ENCODE measurements at regions of chr22 and their contacts with region 1.

Region 1: GRCh38 chr22:28829358-28830181 is 29.2 kb upstream of the XBP1 start:
- DNase-seq: peak; percentile 74
- H3K4me3 Mint-ChIP-seq: no peak overlapping the region
- H3K27ac Mint-ChIP-seq: no peak overlapping the region
- H3K4me1 Mint-ChIP-seq: peaks cover 9% of the 10 kb centered on the region
- H3K27me3 Mint-ChIP-seq: no peaks in the 10 kb centered on the region
- CTCF ChIP-seq: peak; percentile 95

Region 2: GRCh38 chr22:28741758-28742561 is 87.6 kb before region 1 on chr22 and contains the starts of genes CHEK2 and HSCB:
- CTCF ChIA-PET with region 1: no interaction called
- intact Hi-C with region 1: loop called (anchors 5 kb)
- DNase-seq: peak; percentile 98
- H3K4me3 Mint-ChIP-seq: peak within 1 kb of the TSS; percentile 90
- H3K27ac Mint-ChIP-seq: peak within 1 kb of the TSS; percentile 87
- H3K4me1 Mint-ChIP-seq: peaks cover 29% of the 10 kb centered on the region
- H3K27me3 Mint-ChIP-seq: no peaks in the 10 kb centered on the region
- CTCF ChIP-seq: no peak
- total RNA-seq, gene CHEK2: 27.0 and 35.7 TPM in 2 replicates
- total RNA-seq, gene HSCB: 15.7 and 16.5 TPM in 2 replicates

Region 3: DNA sequence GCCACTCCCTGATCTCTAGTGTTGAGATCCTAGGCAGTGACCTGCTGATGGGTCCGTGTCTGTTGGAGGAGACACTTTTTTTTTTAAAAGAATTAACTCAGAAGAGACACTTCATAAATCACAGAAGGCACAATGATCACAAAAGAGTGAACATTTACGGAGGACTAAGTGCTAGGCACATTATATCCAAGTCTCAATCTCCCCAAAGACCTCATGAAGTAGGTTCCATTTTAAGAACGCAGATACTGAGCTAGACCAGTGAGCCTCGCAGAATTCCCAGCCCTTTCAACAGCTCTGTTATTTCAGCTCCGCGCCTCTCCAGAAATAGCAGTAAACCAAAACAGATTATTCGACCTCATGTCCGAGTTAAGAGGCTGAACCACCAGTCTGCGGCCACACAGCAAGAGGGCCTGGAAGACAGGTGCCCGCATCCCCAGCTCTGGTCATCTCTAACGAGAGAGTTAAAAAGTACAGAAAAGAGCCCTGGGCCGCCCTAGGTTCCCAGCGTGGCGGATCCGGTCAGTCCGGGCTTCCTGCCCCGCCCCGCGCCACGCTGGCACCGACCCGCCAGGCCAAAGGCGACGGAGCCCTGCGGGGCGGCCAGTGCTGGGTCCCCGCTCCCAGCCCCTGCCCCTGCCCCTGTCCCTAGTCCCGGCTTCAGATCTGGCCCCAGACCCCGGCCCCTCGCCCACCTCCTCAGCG is 29.8 kb before region 1 on chr22:
- CTCF ChIA-PET with region 1: interaction called, 3 read pairs
- intact Hi-C with region 1: loop called (anchors 2 kb)
- DNase-seq: peak; percentile 72
- H3K4me3 Mint-ChIP-seq: peak overlapping the region; percentile 83
- H3K27ac Mint-ChIP-seq: peak overlapping the region; percentile 97
- H3K4me1 Mint-ChIP-seq: peaks cover 23% of the 10 kb centered on the region
- H3K27me3 Mint-ChIP-seq: no peaks in the 10 kb centered on the region
- CTCF ChIP-seq: no peak